ENCODE measurements at regions of chr18 and their contacts with region 1.

Region 1: DNA sequence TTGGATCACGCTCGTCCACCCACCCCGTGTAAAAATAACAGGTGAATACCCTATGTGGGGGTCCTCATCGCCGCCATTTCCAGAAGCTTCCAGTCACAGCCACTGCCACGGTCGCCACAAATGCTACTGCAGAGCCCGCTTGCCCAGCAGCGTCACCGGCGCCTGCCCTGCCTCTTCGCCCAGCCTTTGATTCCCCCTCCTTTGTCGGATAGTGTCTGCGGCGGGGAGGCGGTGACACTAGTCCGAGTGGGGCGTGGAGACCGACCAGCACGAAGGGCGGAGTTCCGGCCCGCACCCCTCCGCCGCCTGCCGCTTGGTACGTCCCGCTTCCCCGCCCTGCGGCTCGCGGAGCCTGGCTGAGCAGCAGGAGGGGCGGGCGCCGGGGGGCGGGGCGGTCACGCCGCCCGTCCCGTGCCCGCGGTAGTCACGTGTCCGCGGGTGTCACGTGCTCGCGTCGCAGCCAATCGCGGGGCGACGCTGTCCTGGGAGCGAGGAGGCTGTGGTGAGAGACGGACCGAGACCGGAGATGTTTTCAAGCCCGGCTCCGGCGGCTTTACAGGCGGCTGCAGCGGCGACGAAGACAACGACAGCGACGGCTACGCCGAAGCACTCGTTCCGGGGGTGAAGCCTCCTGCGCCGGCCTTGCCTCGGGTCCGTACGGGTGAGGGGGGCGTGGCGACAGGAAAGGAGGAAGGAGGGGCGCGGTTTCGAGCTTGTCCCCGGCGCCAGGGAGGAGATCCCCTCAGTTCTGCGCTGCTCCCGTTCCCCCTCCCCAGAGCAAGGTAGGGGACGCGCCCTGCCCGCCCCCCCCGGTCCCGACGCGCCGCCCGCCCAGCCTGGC is at the start of gene ANKRD12:
- DNase-seq: peak; percentile 94 to 99 (median 97)
- ATAC-seq: peak; percentile 68 to 69
- H3K4me3 Mint-ChIP-seq: peak within 1 kb of the TSS; percentile 88 to 99 (median 97)
- H3K27ac Mint-ChIP-seq: peak within 1 kb of the TSS; percentile 98 to 100 (median 99)
- H3K4me1 Mint-ChIP-seq: peaks cover 33 to 80% (median 65%) of the 10 kb centered on the region in 4 donors
- H3K27me3 Mint-ChIP-seq: no peaks in the 10 kb centered on the region
- polyA plus RNA-seq, gene ANKRD12: 15.7 to 70.4 (median 26.3) TPM

Region 2: GRCh38 chr18:9069601-9070000 is 66.9 kb before region 1 on chr18:
- POLR2A ChIA-PET with region 1: interaction called, 18 read pairs
- DNase-seq: no peak
- ATAC-seq: no peak
- H3K4me3 Mint-ChIP-seq: no peak overlapping the region
- H3K27ac Mint-ChIP-seq: peak overlapping the region in 3 of 10 donors; percentile 25 to 72 (median 40)
- H3K4me1 Mint-ChIP-seq: peaks cover 0 to 23% (median 8%) of the 10 kb centered on the region in 4 donors
- H3K27me3 Mint-ChIP-seq: peaks cover 0 to 2% (median 0%) of the 10 kb centered on the region in 5 donors

Region 3: GRCh38 chr18:9082711-9083510 is 53.6 kb before region 1 on chr18:
- POLR2A ChIA-PET with region 1: interaction called, 12 read pairs
- DNase-seq: peak in 3 of 10 donors; percentile 14 to 38 (median 32)
- ATAC-seq: peak; percentile 86 to 88
- H3K4me3 Mint-ChIP-seq: peak overlapping the region; percentile 9 to 74 (median 63)
- H3K27ac Mint-ChIP-seq: peak overlapping the region; percentile 73 to 96 (median 92)
- H3K4me1 Mint-ChIP-seq: peaks cover 16 to 29% (median 23%) of the 10 kb centered on the region in 4 donors
- H3K27me3 Mint-ChIP-seq: no peaks in the 10 kb centered on the region

Region 4: DNA sequence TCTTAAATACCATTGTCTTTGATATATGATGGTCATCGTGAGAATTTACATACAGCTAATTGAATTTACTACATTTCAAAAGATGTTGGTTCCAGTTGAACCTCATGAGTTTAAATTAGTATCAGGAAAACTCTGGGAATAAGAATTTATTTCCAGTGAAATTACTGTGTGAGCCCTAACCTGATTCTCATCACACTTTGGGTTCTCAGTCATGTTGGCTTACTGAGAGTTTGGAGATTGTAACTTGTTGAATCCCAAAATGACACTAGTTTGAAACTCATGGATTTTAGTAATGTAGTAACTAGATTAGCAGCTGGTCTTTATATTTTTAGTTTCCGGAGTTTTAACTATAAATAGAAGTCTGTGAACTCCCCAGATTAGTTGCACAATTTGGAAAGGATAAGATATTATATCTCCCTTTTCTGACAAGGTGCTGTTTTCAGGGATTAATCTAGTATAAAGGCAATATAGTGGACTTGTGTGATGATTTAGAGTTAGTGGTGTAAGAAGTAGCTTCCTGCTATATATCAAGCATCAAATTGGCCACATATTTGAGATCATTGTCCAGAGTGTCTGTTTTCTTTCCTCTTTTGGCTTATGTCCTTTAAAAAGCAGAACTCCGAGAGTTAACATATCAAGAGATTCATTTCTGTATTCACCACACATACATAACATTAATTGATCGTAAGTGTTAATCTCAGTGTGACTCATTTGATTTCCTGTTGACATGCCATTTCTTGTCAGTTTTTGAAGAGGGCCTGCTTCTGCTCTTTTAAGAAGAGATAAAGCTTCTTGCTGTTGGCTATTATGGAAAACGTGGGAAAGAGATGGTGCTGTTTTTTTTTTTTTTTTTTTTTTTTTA is 18.3 kb before region 1 on chr18:
- POLR2A ChIA-PET with region 1: interaction called, 214 read pairs
- DNase-seq: peak in 3 of 10 donors; percentile 31 to 44 (median 32)
- ATAC-seq: peak; percentile 57 to 58
- H3K4me3 Mint-ChIP-seq: peak overlapping the region; percentile 38 to 98 (median 76)
- H3K27ac Mint-ChIP-seq: peak overlapping the region; percentile 89 to 100 (median 95)
- H3K4me1 Mint-ChIP-seq: peaks cover 26 to 89% (median 67%) of the 10 kb centered on the region in 4 donors
- H3K27me3 Mint-ChIP-seq: no peaks in the 10 kb centered on the region

Region 5: GRCh38 chr18:9147440-9148202 is 11.1 kb after region 1 on chr18:
- POLR2A ChIA-PET with region 1: interaction called, 10 read pairs
- DNase-seq: peak in 8 of 10 donors; percentile 23 to 66 (median 49)
- ATAC-seq: peak; percentile 80
- H3K4me3 Mint-ChIP-seq: peak overlapping the region in 9 of 10 donors; percentile 3 to 67 (median 30)
- H3K27ac Mint-ChIP-seq: peak overlapping the region; percentile 44 to 90 (median 73)
- H3K4me1 Mint-ChIP-seq: peaks cover 25 to 87% (median 67%) of the 10 kb centered on the region in 4 donors
- H3K27me3 Mint-ChIP-seq: no peaks in the 10 kb centered on the region

Region 6: GRCh38 chr18:9334329-9334972 is 197.9 kb after region 1 on chr18 and contains the start of gene TWSG1:
- POLR2A ChIA-PET with region 1: interaction called, 24 read pairs
- DNase-seq: peak; percentile 88 to 97 (median 93)
- ATAC-seq: peak; percentile 87 to 90
- H3K4me3 Mint-ChIP-seq: peak within 1 kb of the TSS; percentile 83 to 96 (median 90)
- H3K27ac Mint-ChIP-seq: peak within 1 kb of the TSS; percentile 69 to 98 (median 94)
- H3K4me1 Mint-ChIP-seq: peaks cover 1 to 31% (median 22%) of the 10 kb centered on the region in 4 donors
- H3K27me3 Mint-ChIP-seq: peaks cover 0 to 3% (median 0%) of the 10 kb centered on the region in 5 donors
- polyA plus RNA-seq, gene TWSG1: 4.0 to 6.1 (median 4.9) TPM